PC-3 (cell line): ENCODE measurements at regions of chr7 and their contacts with region 1.

Region 1: GRCh38 chr7:24948739-24949138 is 31.2 kb downstream of the OSBPL3 start:
- DNase-seq: no peak
- ATAC-seq: peak; percentile 23; the same call in 1 of the 2 replicates
- H3K4me3 ChIP-seq: no peak overlapping the region
- H3K27ac ChIP-seq: no peak overlapping the region
- H3K4me1 ChIP-seq: peaks cover 17% of the 10 kb centered on the region
- H3K27me3 ChIP-seq: no peaks in the 10 kb centered on the region
- CTCF ChIP-seq: no peak

Region 2: GRCh38 chr7:24926623-24927524 is 21.9 kb before region 1 on chr7:
- CTCF ChIA-PET with region 1: no interaction called
- POLR2A ChIA-PET with region 1: no interaction called
- intact Hi-C with region 1: loop called (anchors 1 kb)
- DNase-seq: peak; percentile 8
- ATAC-seq: peak; percentile 63
- H3K4me3 ChIP-seq: no peak overlapping the region
- H3K27ac ChIP-seq: peak overlapping the region; percentile 41; the same call in 1 of the 2 replicates
- H3K4me1 ChIP-seq: peaks cover 31% of the 10 kb centered on the region
- H3K27me3 ChIP-seq: no peaks in the 10 kb centered on the region
- CTCF ChIP-seq: no peak

Region 3: DNA sequence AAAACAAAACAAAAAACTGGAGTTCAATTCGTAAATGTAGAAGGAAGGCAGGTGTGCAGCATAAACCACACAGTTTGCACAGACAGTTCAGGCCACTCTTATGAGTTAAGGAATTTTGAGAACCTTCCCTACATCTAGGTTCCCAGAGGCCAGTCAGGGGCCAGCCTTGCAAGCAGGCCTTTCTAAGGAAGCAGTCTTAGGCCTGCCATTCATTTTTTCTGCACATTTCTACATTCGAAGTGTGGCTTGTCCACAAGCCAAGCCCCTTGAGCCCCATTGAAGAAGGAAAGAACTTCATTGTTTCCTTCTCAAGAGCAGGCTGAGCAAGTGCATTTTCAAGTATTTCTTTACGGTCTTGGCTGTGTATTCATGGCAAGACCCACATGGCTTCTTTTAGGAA is 42.6 kb after region 1 on chr7:
- CTCF ChIA-PET with region 1: no interaction called
- POLR2A ChIA-PET with region 1: no interaction called
- intact Hi-C with region 1: no loop called
- DNase-seq: no peak
- ATAC-seq: no peak
- H3K4me3 ChIP-seq: no peak overlapping the region
- H3K27ac ChIP-seq: no peak overlapping the region
- H3K4me1 ChIP-seq: no peaks in the 10 kb centered on the region
- H3K27me3 ChIP-seq: no peaks in the 10 kb centered on the region
- CTCF ChIP-seq: no peak

Region 4: GRCh38 chr7:25557379-25557917 is 608.7 kb after region 1 on chr7:
- CTCF ChIA-PET with region 1: no interaction called
- POLR2A ChIA-PET with region 1: no interaction called
- intact Hi-C with region 1: no loop called
- DNase-seq: no peak
- ATAC-seq: no peak
- H3K4me3 ChIP-seq: no peak overlapping the region
- H3K27ac ChIP-seq: no peak overlapping the region
- H3K4me1 ChIP-seq: no peaks in the 10 kb centered on the region
- H3K27me3 ChIP-seq: peaks cover 93% of the 10 kb centered on the region
- CTCF ChIP-seq: no peak